Calu3 (cell line): ENCODE measurements at regions of chr15 and their contacts with region 1.

Region 1: DNA sequence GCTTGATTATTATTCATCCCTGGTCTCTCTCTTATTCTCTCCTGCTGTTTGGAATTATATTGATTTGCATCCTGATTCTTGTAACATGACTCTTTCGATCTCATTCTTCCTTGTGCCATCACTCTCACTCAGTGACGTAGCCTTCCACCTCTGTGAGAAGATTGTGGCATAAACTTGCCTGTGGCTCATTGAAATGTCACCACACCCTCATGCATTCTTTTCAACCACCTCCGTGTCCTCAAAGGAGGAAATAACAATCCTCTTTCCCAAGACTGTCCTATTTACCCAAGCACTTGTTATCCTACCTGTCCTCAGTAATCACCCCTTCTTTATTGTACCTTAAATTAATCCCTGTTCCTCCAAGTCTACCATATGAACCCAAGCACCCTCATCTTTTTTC is 41.2 kb upstream of the GCNT3 start:
- DNase-seq: peak; percentile 68
- H3K4me3 Mint-ChIP-seq: peak overlapping the region; percentile 19
- H3K27ac Mint-ChIP-seq: peak overlapping the region; percentile 95
- H3K4me1 Mint-ChIP-seq: peaks cover 44% of the 10 kb centered on the region
- H3K27me3 Mint-ChIP-seq: no peaks in the 10 kb centered on the region
- CTCF ChIP-seq: no peak

Region 2: DNA sequence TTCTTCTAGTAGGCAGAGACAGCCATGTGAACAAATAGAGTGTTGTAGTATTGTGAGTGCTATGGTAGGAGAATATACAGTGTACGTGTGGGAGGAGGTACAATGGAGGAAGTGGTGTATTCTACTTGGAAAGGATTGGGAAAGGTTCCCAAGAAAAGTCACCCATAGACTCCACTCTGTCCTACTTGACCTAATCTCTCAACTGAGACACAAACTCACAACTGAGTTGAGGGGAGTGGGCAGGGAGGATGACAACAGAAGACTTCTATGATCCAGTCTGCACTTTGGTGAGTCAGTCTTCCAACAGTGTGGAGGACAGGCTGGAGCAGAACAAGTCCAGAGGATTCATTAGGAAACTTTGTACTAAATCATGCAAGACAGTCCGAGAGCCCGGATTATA is 1460.9 kb before region 1 on chr15:
- CTCF ChIA-PET with region 1: no interaction called
- intact Hi-C with region 1: no loop called
- DNase-seq: no peak
- H3K4me3 Mint-ChIP-seq: no peak overlapping the region
- H3K27ac Mint-ChIP-seq: no peak overlapping the region
- H3K4me1 Mint-ChIP-seq: no peaks in the 10 kb centered on the region
- H3K27me3 Mint-ChIP-seq: peaks cover 7% of the 10 kb centered on the region
- CTCF ChIP-seq: no peak

Region 3: DNA sequence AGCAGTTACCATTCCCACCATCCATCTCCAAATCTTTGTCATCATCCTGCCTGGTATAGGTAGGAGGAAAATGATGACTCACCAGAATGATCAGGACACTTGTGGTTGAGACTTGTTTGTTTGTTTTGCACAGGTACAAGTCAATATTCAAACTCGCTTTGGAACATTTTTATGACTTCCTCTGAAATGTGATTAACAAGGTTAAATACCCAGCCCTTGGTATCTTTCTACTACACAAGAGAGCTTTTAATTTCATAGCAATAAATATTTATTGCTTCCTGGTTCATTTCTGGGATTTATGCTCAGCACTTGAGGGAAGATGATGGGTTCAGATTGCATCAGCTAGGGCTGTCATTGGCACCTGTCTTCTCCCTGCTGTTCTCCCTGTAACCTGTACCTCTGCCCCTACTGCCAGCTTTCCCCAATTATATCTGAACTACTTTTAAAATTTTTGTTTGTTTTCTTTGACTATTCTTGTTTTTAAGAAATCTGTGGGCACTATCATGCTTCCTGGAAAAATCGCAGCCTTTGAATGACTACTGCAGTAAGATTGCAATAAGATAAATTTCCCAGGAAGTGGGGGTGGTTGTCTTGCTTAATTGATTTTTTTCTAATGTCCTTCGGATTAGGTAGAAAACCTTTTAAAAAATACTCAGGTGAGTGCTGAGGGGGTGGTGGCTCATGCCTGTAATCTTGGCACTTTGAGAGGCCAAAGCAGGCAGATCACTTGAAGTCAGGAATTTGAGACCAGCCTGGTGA is 16.9 kb after region 1 on chr15:
- CTCF ChIA-PET with region 1: interaction called, 6 read pairs
- intact Hi-C with region 1: loop called (anchors 2 kb)
- DNase-seq: peak; percentile 30
- H3K4me3 Mint-ChIP-seq: peak overlapping the region; percentile 11
- H3K27ac Mint-ChIP-seq: peak overlapping the region; percentile 95
- H3K4me1 Mint-ChIP-seq: peaks cover 26% of the 10 kb centered on the region
- H3K27me3 Mint-ChIP-seq: no peaks in the 10 kb centered on the region
- CTCF ChIP-seq: no peak

Region 4: GRCh38 chr15:59688425-59688840 is 118.1 kb after region 1 on chr15:
- CTCF ChIA-PET with region 1: no interaction called
- intact Hi-C with region 1: no loop called
- DNase-seq: peak; percentile 9
- H3K4me3 Mint-ChIP-seq: peak overlapping the region; percentile 77
- H3K27ac Mint-ChIP-seq: peak overlapping the region; percentile 29
- H3K4me1 Mint-ChIP-seq: peaks cover 35% of the 10 kb centered on the region
- H3K27me3 Mint-ChIP-seq: no peaks in the 10 kb centered on the region
- CTCF ChIP-seq: no peak